HCT116 (cell line): ENCODE measurements at regions of chr12 and their contacts with region 1.

Region 1: GRCh38 chr12:15856097-15856982 is 25.8 kb upstream of the STRAP start:
- DNase-seq: peak; percentile 68
- ATAC-seq: peak; percentile 84
- H3K4me3 ChIP-seq: no peak overlapping the region
- H3K27ac ChIP-seq: no peak overlapping the region
- H3K4me1 ChIP-seq: peaks cover 2 to 13% of the 10 kb centered on the region in 2 experiments; a peak in 3 of 4 replicates
- H3K27me3 ChIP-seq: no peaks in the 10 kb centered on the region
- CTCF ChIP-seq: peak; percentile 54 to 94 (median 68)
- POLR2A ChIP-seq: no peak
- RAD21 ChIP-seq: peak; percentile 97

Region 2: GRCh38 chr12:15276088-15276698 is 580.1 kb before region 1 on chr12:
- CTCF ChIA-PET with region 1: no interaction called
- POLR2A ChIA-PET with region 1: no interaction called
- RAD21 ChIA-PET with region 1: no interaction called
- intact Hi-C with region 1: loop called (anchors 1 kb)
- DNase-seq: peak; percentile 16
- ATAC-seq: peak; percentile 76
- H3K4me3 ChIP-seq: no peak overlapping the region
- H3K27ac ChIP-seq: no peak overlapping the region
- H3K4me1 ChIP-seq: no peaks in the 10 kb centered on the region
- H3K27me3 ChIP-seq: no peaks in the 10 kb centered on the region
- CTCF ChIP-seq: peak; percentile 53 to 75 (median 55); a peak in 4 of 6 replicates
- POLR2A ChIP-seq: no peak
- RAD21 ChIP-seq: peak; percentile 69

Region 3: DNA sequence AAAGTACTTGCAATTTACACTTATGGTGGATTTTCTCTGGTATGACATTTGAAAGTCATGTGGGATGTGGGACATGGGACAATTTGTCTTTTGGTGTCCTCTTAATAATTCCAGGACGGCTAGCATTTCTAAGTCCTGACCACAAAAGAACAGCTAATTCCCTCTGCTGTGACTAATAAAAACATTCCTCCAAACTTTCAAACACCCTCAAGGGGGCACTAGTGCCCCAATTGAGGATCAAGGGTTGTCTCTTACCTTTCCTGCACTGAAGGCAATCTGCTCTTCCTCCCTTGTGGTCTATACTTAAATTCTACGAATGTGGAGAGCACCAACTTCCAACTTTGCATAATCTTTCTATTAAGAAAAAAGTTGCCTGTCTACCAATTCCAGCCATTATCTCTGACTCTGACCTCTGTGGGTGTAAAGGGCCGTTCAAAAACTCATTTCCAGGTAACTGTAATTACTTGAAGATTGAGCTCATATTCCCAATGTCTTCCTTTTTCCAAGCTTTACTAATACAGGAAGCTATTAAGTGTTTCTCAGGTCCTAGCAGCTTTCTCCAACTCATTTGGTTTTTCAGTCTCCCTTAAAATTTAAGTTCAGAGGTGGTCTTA is 323.9 kb before region 1 on chr12:
- CTCF ChIA-PET with region 1: interaction called, 69 read pairs
- POLR2A ChIA-PET with region 1: interaction called, 3 read pairs
- RAD21 ChIA-PET with region 1: interaction called in 1 of 2 experiments, 12 read pairs
- intact Hi-C with region 1: loop called (anchors 1 kb)
- DNase-seq: peak; percentile 72
- ATAC-seq: peak; percentile 96
- H3K4me3 ChIP-seq: no peak overlapping the region
- H3K27ac ChIP-seq: no peak overlapping the region
- H3K4me1 ChIP-seq: peaks cover 0 to 4% of the 10 kb centered on the region in 2 experiments; a peak in 1 of 4 replicates
- H3K27me3 ChIP-seq: no peaks in the 10 kb centered on the region
- CTCF ChIP-seq: peak; percentile 62 to 68 (median 65); a peak in 5 of 6 replicates
- POLR2A ChIP-seq: no peak
- RAD21 ChIP-seq: peak; percentile 83

Region 4: GRCh38 chr12:15584366-15585041 is 271.8 kb before region 1 on chr12:
- CTCF ChIA-PET with region 1: interaction called, 30 read pairs
- POLR2A ChIA-PET with region 1: no interaction called
- RAD21 ChIA-PET with region 1: interaction called, 4 to 5 read pairs
- intact Hi-C with region 1: no loop called
- DNase-seq: peak; percentile 43
- ATAC-seq: 0 out of 2 replicates have a peak, but pooled peaks have one; percentile 62
- H3K4me3 ChIP-seq: no peak overlapping the region
- H3K27ac ChIP-seq: no peak overlapping the region
- H3K4me1 ChIP-seq: no peaks in the 10 kb centered on the region
- H3K27me3 ChIP-seq: no peaks in the 10 kb centered on the region
- CTCF ChIP-seq: peak; percentile 55 to 75 (median 61); a peak in 5 of 6 replicates
- POLR2A ChIP-seq: no peak
- RAD21 ChIP-seq: peak; percentile 67

Region 5: GRCh38 chr12:15590180-15590826 is 266.0 kb before region 1 on chr12:
- CTCF ChIA-PET with region 1: interaction called, 30 read pairs
- POLR2A ChIA-PET with region 1: no interaction called
- RAD21 ChIA-PET with region 1: interaction called, 3 to 4 read pairs
- intact Hi-C with region 1: loop called (anchors 1 kb)
- DNase-seq: peak; percentile 60
- ATAC-seq: peak; percentile 87
- H3K4me3 ChIP-seq: peak overlapping the region; percentile 13 to 36; a peak in 2 of 4 replicates
- H3K27ac ChIP-seq: no peak overlapping the region
- H3K4me1 ChIP-seq: peaks cover 3 to 10% of the 10 kb centered on the region in 2 experiments; a peak in 3 of 4 replicates
- H3K27me3 ChIP-seq: no peaks in the 10 kb centered on the region
- CTCF ChIP-seq: peak; percentile 76 to 87 (median 86)
- POLR2A ChIP-seq: no peak
- RAD21 ChIP-seq: peak; percentile 98

Region 6: GRCh38 chr12:15772405-15773018 is 83.8 kb before region 1 on chr12:
- CTCF ChIA-PET with region 1: interaction called, 6 read pairs
- POLR2A ChIA-PET with region 1: no interaction called
- RAD21 ChIA-PET with region 1: interaction called in 1 of 2 experiments, 3 read pairs
- intact Hi-C with region 1: loop called (anchors 5 kb)
- DNase-seq: no peak
- ATAC-seq: peak; percentile 55; the same call in 1 of the 2 replicates
- H3K4me3 ChIP-seq: no peak overlapping the region
- H3K27ac ChIP-seq: no peak overlapping the region
- H3K4me1 ChIP-seq: peaks cover 0 to 19% of the 10 kb centered on the region in 2 experiments; a peak in 2 of 4 replicates
- H3K27me3 ChIP-seq: no peaks in the 10 kb centered on the region
- CTCF ChIP-seq: peak; percentile 29 to 69 (median 45); a peak in 5 of 6 replicates
- POLR2A ChIP-seq: no peak
- RAD21 ChIP-seq: peak; percentile 46; the same call in 1 of the 2 replicates